ENCODE measurements at regions of chr9 and their contacts with region 1.

Region 1: GRCh38 chr9:36008774-36009300 is 27.9 kb upstream of the RECK start:
- DNase-seq: peak; percentile 54
- H3K4me3 ChIP-seq: no peak overlapping the region
- H3K27ac ChIP-seq: no peak overlapping the region
- H3K4me1 ChIP-seq: no peaks in the 10 kb centered on the region
- H3K27me3 ChIP-seq: peaks cover 2 to 16% of the 10 kb centered on the region in 2 experiments
- CTCF ChIP-seq: peak; percentile 80 to 100
- POLR2A ChIP-seq: no peak

Region 2: GRCh38 chr9:35910613-35911359 is 98.1 kb before region 1 on chr9:
- CTCF ChIA-PET with region 1: no interaction called
- POLR2A ChIA-PET with region 1: no interaction called
- dilution Hi-C with region 1: no loop called
- intact Hi-C with region 1: loop called (anchors 5 kb)
- DNase-seq: peak; percentile 86
- H3K4me3 ChIP-seq: peak overlapping the region in 2 of 3 experiments; percentile 4 to 53
- H3K27ac ChIP-seq: peak overlapping the region; percentile 94
- H3K4me1 ChIP-seq: peaks cover 68% of the 10 kb centered on the region
- H3K27me3 ChIP-seq: no peaks in the 10 kb centered on the region
- CTCF ChIP-seq: peak; percentile 60 to 65
- POLR2A ChIP-seq: peak; percentile 61

Region 3: GRCh38 chr9:35996358-35996975 is 12.4 kb before region 1 on chr9:
- CTCF ChIA-PET with region 1: interaction called, 25 read pairs
- POLR2A ChIA-PET with region 1: no interaction called
- dilution Hi-C with region 1: no loop called
- intact Hi-C with region 1: no loop called
- DNase-seq: no peak
- H3K4me3 ChIP-seq: no peak overlapping the region
- H3K27ac ChIP-seq: no peak overlapping the region
- H3K4me1 ChIP-seq: no peaks in the 10 kb centered on the region
- H3K27me3 ChIP-seq: peaks cover 2 to 4% of the 10 kb centered on the region in 2 experiments
- CTCF ChIP-seq: no peak
- POLR2A ChIP-seq: no peak

Region 4: GRCh38 chr9:36110434-36110833 is 101.6 kb after region 1 on chr9:
- CTCF ChIA-PET with region 1: interaction called, 12 read pairs
- POLR2A ChIA-PET with region 1: no interaction called
- dilution Hi-C with region 1: no loop called
- intact Hi-C with region 1: no loop called
- DNase-seq: no peak
- H3K4me3 ChIP-seq: no peak overlapping the region
- H3K27ac ChIP-seq: no peak overlapping the region
- H3K4me1 ChIP-seq: no peaks in the 10 kb centered on the region
- H3K27me3 ChIP-seq: no peaks in the 10 kb centered on the region
- CTCF ChIP-seq: no peak
- POLR2A ChIP-seq: no peak

Region 5: DNA sequence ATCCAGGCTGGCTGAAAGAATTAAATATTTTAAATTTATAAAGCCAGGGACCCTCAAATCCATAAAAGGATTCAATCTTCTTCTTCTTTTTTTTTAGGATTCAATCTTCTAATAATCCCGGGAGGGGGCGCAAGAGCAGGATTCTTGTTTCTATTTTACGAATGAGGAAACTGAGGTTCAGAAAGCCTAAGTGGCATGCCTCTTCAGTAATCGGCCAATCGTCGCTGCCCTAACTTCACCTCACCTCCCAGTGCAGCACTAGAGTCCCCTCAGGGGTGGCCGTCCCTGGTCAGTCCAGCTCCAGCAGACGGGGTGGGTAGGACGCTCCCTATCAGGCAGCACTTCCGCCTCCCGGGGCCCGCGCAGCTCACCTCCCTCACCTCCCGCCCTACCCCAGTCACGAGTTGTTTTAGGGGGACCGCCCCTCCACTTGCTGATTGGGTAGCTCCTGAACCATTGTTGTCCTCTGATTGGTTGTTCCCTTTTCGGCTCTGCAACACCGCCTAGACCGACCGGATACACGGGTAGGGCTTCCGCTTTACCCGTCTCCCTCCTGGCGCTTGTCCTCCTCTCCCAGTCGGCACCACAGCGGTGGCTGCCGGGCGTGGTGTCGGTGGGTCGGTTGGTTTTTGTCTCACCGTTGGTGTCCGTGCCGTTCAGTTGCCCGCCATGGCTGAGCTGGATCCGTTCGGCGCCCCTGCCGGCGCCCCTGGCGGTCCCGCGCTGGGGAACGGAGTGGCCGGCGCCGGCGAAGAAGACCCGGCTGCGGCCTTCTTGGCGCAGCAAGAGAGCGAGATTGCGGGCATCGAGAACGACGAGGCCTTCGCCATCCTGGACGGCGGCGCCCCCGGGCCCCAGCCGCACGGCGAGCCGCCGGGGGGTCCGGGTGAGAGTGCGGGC is 181.8 kb after region 1 on chr9 and contains the start of gene CLTA:
- CTCF ChIA-PET with region 1: interaction called, 10 read pairs
- POLR2A ChIA-PET with region 1: no interaction called
- dilution Hi-C with region 1: no loop called
- intact Hi-C with region 1: no loop called
- DNase-seq: peak; percentile 98
- H3K4me3 ChIP-seq: peak within 1 kb of the TSS; percentile 80 to 93 (median 90)
- H3K27ac ChIP-seq: peak within 1 kb of the TSS; percentile 78
- H3K4me1 ChIP-seq: peaks cover 31% of the 10 kb centered on the region
- H3K27me3 ChIP-seq: no peaks in the 10 kb centered on the region
- CTCF ChIP-seq: peak; percentile 40 to 50
- POLR2A ChIP-seq: peak; percentile 98
- total RNA-seq, gene CLTA: 281 and 317 TPM in 2 replicates